CD8-positive, alpha-beta T cell (primary cell): ENCODE measurements at regions of chr12 and their contacts with region 1.

Region 1: GRCh38 chr12:12356886-12357718 is at the start of gene BORCS5:
- DNase-seq: peak; percentile 97 to 99 (median 99)
- ATAC-seq: peak; percentile 91
- H3K4me3 ChIP-seq: peak within 1 kb of the TSS; percentile 69 to 83
- H3K4me3 Mint-ChIP-seq: peak within 1 kb of the TSS; percentile 90
- H3K27ac ChIP-seq: peak within 1 kb of the TSS; percentile 85 to 95
- H3K27ac Mint-ChIP-seq: peak within 1 kb of the TSS; percentile 96
- H3K4me1 ChIP-seq: peaks cover 31% of the 10 kb centered on the region
- H3K4me1 Mint-ChIP-seq: peaks cover 48% of the 10 kb centered on the region
- H3K27me3 ChIP-seq: no peaks in the 10 kb centered on the region
- H3K27me3 Mint-ChIP-seq: no peaks in the 10 kb centered on the region
- CTCF ChIP-seq: peak; percentile 10
- total RNA-seq, gene BORCS5: 33.8 to 38.8 TPM

Region 2: DNA sequence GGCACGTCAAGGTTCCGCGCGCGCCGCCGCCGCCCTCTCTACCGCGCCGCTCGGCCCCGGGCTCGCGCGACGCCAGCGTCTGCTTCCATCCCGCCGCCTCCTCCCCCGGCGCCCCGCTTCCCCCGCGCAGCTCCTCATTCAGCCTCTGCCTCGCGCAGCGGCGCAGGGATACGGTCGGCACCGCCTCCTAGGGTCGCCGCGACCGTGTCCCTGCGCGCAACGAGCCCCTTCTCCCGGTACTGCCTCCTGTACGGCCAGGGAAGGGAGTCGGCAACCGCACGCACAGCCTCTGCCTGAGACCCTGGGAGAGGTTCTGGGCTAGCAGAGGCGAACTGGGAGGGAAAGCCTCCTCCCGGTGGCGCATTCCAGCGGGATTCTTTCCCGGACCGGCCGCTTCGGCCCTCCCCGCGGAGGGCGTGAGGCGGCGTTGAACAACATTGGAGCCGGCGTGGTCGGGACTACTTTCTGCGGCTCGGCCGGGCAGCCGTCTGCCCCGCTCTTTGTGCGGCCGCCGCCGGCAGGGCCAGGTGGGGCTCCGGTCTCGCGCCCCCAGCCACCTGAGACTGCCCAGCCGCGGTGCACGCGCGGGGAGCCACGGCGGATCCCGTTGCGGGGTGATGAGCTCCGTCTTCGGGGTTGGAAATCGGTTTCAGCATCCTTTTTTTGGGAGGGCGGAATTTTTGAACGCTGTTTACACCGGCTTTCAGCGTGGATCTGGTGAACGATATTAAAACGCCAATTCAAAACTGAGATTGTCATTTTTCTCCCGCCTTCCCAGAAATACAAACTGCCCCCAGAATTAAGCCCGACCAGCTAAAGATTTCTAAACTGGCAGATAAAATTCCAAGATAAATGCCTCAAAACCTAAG is 90.0 kb before region 1 on chr12 and contains the start of gene LRP6:
- CTCF ChIA-PET with region 1: no interaction called
- POLR2A ChIA-PET with region 1: no interaction called
- intact Hi-C with region 1: loop called in 1 of 2 experiments (anchors 2 kb)
- DNase-seq: peak; percentile 33 to 83 (median 69)
- ATAC-seq: peak; percentile 91
- H3K4me3 ChIP-seq: peak within 1 kb of the TSS; percentile 66 to 85
- H3K4me3 Mint-ChIP-seq: peak within 1 kb of the TSS; percentile 87
- H3K27ac ChIP-seq: peak within 1 kb of the TSS in 1 of 2 experiments; percentile 35
- H3K27ac Mint-ChIP-seq: no peak within 1 kb of the TSS
- H3K4me1 ChIP-seq: peaks cover 14% of the 10 kb centered on the region
- H3K4me1 Mint-ChIP-seq: peaks cover 23% of the 10 kb centered on the region
- H3K27me3 ChIP-seq: peaks cover 0 to 20% of the 10 kb centered on the region in 2 experiments
- H3K27me3 Mint-ChIP-seq: peaks cover 28% of the 10 kb centered on the region
- CTCF ChIP-seq: no peak
- total RNA-seq, gene LRP6: 1.3 to 2.1 TPM

Region 3: DNA sequence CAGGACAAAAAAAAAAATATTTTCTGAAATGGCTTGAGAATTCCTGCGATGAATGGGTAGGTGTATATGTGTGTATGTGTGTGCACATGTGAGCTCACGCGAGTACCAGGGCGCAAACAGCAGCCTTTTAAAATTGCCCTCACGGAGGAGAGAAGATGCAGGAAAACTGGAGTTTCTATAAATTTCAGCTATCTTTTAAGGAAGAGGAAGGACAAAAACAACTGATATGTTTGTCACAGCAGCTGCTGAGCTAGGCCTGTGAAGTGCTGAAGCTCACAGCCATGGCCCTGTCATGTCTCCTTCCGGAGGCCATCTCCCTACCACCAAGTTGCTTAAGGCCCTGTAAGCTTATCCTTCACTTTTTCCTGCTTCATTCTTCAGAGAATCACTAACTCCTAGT is 164.8 kb after region 1 on chr12:
- CTCF ChIA-PET with region 1: no interaction called
- POLR2A ChIA-PET with region 1: interaction called, 11 read pairs
- intact Hi-C with region 1: no loop called
- DNase-seq: no peak
- ATAC-seq: no peak
- H3K4me3 ChIP-seq: no peak overlapping the region
- H3K4me3 Mint-ChIP-seq: no peak overlapping the region
- H3K27ac ChIP-seq: no peak overlapping the region
- H3K27ac Mint-ChIP-seq: peak overlapping the region; percentile 9
- H3K4me1 ChIP-seq: peaks cover 4% of the 10 kb centered on the region
- H3K4me1 Mint-ChIP-seq: peaks cover 35% of the 10 kb centered on the region
- H3K27me3 ChIP-seq: no peaks in the 10 kb centered on the region
- H3K27me3 Mint-ChIP-seq: no peaks in the 10 kb centered on the region
- CTCF ChIP-seq: no peak

Region 4: DNA sequence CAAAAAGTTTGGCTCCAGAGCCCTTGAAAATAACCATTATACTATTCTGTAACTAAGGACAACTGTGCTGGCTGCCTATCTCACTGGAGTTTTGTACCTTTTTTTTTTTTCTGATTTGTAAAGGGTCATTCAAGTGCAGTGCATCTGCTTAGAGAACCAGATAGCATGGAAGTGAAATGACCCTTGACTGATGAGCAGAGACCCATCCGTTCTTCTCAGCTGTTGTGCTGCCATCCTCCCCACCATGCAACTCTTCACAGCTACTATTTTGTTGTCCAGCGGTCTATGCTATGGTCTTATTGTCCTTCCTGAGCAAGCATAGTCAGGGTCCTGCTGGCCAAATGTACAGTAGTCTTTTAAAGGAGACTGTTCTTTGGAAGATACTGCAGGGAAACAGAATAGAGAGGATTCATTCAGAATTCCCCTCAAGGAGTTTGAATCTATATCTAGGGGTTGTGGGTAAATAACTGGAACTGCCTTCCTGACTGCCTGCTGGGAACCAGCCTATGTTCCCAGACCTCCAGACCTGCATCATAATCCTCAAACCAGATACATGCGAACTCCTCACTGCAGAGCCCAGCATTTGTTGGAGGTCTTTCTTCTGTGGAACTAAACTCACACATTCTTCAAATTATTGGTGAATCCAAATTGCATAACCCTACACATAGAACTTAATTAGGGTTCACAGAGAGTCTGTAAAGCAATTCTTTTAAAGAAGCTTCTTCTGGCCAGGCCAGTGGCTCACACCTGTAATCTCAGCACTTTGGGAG is 297.8 kb after region 1 on chr12:
- CTCF ChIA-PET with region 1: interaction called, 11 read pairs
- POLR2A ChIA-PET with region 1: no interaction called
- intact Hi-C with region 1: no loop called
- DNase-seq: no peak
- ATAC-seq: no peak
- H3K4me3 ChIP-seq: no peak overlapping the region
- H3K4me3 Mint-ChIP-seq: no peak overlapping the region
- H3K27ac ChIP-seq: no peak overlapping the region
- H3K27ac Mint-ChIP-seq: no peak overlapping the region
- H3K4me1 ChIP-seq: no peaks in the 10 kb centered on the region
- H3K4me1 Mint-ChIP-seq: peaks cover 11% of the 10 kb centered on the region
- H3K27me3 ChIP-seq: no peaks in the 10 kb centered on the region
- H3K27me3 Mint-ChIP-seq: no peaks in the 10 kb centered on the region
- CTCF ChIP-seq: no peak

Region 5: DNA sequence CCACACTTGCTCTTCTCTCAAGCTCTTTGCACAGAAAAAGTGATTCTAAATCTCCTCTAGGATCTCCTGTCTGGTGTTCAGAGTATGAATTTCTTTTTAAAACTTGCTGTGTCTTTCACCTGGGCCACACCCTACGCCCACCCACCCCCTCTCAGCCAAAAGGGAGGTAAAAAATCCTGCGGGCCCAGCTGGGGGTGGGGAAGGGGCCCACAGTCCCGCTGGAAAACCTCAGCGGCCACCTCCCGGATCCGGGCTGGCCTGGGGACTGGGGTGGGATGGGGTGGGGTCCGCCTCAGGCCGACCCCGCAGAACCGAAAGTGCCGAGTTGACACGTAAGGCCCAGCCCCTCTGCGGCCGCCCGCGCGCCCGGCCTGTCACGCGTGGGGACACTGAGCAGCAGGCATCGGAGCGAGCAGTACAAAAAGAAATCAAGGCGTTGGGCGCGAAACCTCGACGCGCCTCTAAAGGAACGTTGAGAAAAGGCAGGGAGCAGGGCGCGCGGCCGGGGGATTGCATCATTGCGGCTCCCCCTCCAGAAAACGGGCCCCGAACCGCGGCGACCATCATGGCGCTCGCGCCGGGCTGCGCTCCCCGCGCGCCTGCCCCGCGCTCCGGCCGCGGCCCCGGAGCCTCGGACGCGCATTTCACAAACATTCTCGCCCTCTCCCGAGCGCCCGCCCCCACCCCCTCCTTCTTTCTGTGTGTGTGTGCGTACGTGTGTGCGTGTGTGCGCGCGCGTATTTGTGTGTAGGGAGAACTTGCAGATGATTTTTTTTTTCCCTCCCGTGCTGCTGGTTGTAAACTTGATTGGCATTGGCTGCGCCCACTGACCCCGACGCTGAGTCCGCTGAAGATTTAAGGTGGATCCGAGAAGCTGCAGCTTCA is 367.8 kb after region 1 on chr12:
- CTCF ChIA-PET with region 1: interaction called, 4 read pairs
- POLR2A ChIA-PET with region 1: interaction called, 43 read pairs
- intact Hi-C with region 1: loop called (anchors 1 kb)
- DNase-seq: peak in 8 of 9 experiments; percentile 82 to 98 (median 86)
- ATAC-seq: peak; percentile 57
- H3K4me3 ChIP-seq: peak overlapping the region; percentile 90 to 92
- H3K4me3 Mint-ChIP-seq: peak overlapping the region; percentile 82
- H3K27ac ChIP-seq: peak overlapping the region; percentile 93 to 97
- H3K27ac Mint-ChIP-seq: peak overlapping the region; percentile 99
- H3K4me1 ChIP-seq: peaks cover 51% of the 10 kb centered on the region
- H3K4me1 Mint-ChIP-seq: peaks cover 52% of the 10 kb centered on the region
- H3K27me3 ChIP-seq: no peaks in the 10 kb centered on the region
- H3K27me3 Mint-ChIP-seq: no peaks in the 10 kb centered on the region
- CTCF ChIP-seq: no peak

Region 6: DNA sequence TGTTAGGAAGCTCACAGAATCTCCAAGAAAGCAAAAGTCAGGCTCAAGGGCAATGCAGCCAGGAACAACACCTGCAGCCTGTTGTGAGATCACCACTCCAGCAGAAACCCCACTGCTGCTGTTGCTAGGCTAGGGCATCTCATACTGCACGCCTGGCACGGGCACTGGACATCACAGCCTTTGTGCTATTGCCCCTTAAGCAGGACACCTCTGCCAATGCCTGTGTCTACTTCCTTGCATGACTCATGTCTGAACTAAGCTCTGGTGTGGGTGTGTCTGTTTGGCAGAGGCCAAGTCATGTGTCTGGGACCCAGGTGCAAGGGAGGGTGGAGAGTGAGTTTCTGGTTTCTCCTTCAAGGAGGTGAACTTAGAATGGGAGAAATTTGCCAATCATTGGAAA is 446.1 kb after region 1 on chr12:
- CTCF ChIA-PET with region 1: interaction called, 3 read pairs
- POLR2A ChIA-PET with region 1: no interaction called
- intact Hi-C with region 1: loop called in 1 of 2 experiments (anchors 5 kb)
- DNase-seq: peak in 5 of 9 experiments; percentile 28 to 46 (median 38)
- ATAC-seq: peak; percentile 35
- H3K4me3 ChIP-seq: no peak overlapping the region
- H3K4me3 Mint-ChIP-seq: no peak overlapping the region
- H3K27ac ChIP-seq: no peak overlapping the region
- H3K27ac Mint-ChIP-seq: peak overlapping the region; percentile 73
- H3K4me1 ChIP-seq: peaks cover 22% of the 10 kb centered on the region
- H3K4me1 Mint-ChIP-seq: peaks cover 41% of the 10 kb centered on the region
- H3K27me3 ChIP-seq: no peaks in the 10 kb centered on the region
- H3K27me3 Mint-ChIP-seq: no peaks in the 10 kb centered on the region
- CTCF ChIP-seq: no peak

Region 7: DNA sequence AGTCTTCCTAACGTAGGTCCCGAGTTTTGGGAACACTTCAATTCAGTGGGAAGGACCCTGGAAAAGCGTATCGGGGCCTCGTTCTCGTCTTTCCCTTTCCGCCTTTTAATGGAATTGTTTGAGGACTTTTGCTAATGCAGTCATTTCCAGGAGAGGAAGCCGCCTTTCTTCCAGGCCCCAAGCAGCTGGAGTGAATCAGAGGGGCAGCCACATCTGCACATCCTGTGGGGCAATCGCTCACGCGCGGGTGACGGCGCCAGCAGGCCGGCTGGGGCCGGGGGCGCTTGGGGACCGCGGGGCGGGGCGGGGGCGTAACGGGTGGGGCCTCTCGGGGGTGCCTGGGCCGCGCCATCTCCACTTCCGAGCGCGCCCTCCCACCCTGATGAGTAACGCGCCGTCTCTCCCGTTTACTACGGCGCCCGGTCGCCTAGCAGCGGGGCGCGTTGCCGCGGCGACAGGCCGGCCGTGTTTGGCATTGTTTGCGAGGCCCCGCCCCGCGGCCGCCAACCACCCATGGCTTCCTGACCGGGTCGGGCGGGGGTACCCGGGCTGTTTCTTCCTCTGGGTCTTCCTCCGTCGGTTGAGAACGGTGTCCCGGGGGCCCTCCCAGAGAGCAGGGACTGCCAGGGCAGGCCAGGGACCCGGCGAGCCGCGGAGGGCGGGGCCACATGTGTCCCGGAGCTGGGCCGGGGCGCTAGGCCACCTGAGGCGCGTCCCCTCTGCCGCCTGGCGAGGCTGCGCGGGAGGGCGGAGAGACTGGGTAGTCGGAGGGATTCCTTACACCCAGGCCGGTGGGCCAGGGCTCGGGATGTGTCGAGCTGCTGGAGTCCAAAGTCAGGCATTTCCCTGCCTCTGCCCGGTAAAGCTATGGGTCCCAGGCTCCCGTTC is 744.0 kb after region 1 on chr12:
- CTCF ChIA-PET with region 1: no interaction called
- POLR2A ChIA-PET with region 1: no interaction called
- intact Hi-C with region 1: loop called (anchors 2 to 10 kb)
- DNase-seq: peak; percentile 86 to 97 (median 93)
- ATAC-seq: peak; percentile 87
- H3K4me3 ChIP-seq: peak overlapping the region; percentile 55 to 77
- H3K4me3 Mint-ChIP-seq: peak overlapping the region; percentile 81
- H3K27ac ChIP-seq: peak overlapping the region; percentile 83 to 95
- H3K27ac Mint-ChIP-seq: peak overlapping the region; percentile 89
- H3K4me1 ChIP-seq: peaks cover 27% of the 10 kb centered on the region
- H3K4me1 Mint-ChIP-seq: peaks cover 36% of the 10 kb centered on the region
- H3K27me3 ChIP-seq: no peaks in the 10 kb centered on the region
- H3K27me3 Mint-ChIP-seq: no peaks in the 10 kb centered on the region
- CTCF ChIP-seq: no peak